GM18951 (cell line): ENCODE measurements at regions of chr14 and their contacts with region 1.

Region 1: GRCh38 chr14:22852940-22853767 is 16.8 kb downstream of the MMP14 start:
- POLR2A ChIP-seq: no peak

Region 2: DNA sequence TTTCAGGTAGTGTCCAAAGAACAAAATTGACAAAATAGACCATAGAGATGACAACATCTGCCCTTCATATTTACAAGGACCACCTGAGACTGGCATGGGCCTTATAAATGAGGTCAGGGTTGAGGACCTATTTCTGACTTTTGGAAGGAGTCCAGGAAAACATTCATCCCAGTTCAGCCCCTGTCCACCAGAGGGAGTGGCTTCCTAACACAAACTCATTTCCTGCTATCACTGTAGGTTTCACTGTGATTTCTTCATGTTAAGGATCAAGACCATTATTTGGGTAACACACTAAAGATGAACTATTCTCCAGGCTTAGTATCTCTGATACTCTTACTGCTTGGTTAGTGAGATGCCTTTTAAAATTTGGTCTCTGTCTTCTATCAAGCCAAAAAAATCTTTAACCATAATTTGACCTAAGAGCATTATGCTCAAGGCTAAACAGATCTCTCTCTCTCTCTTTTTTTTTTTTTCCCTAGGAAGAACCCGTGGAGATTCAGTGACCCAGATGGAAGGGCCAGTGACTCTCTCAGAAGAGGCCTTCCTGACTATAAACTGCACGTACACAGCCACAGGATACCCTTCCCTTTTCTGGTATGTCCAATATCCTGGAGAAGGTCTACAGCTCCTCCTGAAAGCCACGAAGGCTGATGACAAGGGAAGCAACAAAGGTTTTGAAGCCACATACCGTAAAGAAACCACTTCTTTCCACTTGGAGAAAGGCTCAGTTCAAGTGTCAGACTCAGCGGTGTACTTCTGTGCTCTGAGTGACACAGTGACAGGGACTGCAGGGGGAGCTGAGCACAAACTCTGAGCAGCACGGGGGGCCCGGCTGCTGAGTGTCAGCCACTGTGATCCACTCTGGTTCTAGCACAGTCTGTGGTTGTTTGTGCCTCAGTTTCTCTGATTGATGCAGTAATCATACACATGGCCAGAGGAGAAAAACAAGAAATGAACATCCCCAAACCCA is 912.0 kb before region 1 on chr14:
- in situ Hi-C with region 1: no loop called
- POLR2A ChIP-seq: no peak

Region 3: DNA sequence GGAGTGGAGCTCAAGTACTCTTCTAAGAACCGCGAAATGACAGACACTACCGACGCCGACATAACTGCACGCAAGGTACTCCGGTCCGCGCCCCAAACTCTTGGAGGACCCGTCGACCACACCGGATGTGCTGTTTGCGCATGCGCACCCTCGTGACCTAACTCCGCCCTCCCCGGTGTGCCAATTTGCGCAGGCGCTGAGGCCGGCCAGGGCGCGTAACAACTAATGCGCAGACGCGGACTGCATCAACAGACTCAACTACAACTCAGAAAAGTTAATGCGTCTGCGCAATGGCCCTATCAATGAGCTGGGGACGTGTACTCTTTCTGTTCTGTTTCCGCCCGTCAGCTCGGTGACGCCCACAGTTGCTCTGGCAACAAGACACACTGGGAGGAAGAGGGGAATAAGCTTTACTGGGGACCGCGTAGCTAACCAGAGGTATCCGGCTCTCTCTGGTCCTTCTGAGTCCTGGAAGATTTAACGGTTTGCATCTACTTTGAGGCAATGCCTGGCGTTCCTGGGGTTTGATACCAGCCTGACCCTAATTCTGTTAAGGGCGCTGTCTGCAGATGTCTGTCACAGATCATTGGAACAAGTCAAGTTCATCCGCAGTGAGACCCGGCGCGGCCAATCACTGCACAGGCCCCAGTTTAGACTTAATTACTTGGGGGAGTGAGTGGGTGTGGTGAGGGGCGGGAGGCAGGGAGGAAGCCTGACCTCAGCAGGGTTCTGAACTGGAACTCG is 263.9 kb before region 1 on chr14 and contains the start of gene DAD1:
- in situ Hi-C with region 1: loop called (anchors 10 kb)
- POLR2A ChIP-seq: peak; percentile 97

Region 4: DNA sequence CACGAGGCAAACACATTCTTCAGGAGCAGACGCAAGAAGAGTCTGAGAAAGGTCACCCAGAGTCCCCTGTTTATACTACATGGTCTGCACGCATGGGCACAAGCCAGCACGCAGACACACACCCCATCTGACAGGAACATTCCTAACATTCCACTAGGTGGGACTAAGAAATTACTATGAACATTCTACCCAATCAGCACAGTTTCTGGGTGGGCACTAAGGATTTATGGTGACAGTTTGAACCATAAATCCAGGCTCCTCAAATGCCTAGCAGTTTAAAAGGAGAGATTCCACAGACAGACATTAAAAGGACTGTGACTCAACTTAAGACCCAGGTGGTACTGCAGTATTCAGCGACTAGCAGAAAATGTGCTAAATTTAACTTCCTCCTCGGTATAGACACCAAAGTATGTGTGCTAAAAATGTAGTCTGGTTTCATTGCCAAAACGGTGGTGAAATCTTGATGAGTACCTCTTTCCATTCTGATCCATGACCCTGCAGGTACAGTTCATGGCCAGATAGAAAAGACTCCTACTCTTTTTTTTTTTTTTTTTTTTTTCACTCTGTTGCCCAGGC is 238.8 kb before region 1 on chr14:
- in situ Hi-C with region 1: no loop called
- POLR2A ChIP-seq: no peak

Region 5: GRCh38 chr14:22653012-22653621 is 200.0 kb before region 1 on chr14:
- in situ Hi-C with region 1: loop called (anchors 10 kb)
- POLR2A ChIP-seq: no peak

Region 6: DNA sequence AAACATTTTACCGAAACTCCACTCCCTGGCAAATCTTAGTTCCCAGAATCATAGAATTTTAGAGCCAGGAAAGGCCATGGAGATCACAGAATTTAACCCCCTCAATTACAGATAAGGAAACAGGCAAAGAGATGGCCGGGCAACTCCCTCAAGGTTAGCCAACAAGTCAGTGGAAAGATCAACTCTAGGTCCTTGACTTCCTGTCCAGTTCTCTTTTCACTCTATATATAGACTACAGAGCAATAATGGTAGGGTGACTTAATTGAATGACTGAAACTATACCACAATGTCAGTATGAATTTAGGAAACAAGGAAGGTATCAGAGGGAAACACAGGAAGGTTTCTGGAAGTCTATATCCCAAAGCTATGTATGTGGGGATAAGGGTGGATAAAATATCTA is 75.1 kb before region 1 on chr14:
- in situ Hi-C with region 1: loop called (anchors 10 kb)
- POLR2A ChIP-seq: no peak